MCF 10A (cell line): ENCODE measurements at regions of chr1 and their contacts with region 1.

Region 1: DNA sequence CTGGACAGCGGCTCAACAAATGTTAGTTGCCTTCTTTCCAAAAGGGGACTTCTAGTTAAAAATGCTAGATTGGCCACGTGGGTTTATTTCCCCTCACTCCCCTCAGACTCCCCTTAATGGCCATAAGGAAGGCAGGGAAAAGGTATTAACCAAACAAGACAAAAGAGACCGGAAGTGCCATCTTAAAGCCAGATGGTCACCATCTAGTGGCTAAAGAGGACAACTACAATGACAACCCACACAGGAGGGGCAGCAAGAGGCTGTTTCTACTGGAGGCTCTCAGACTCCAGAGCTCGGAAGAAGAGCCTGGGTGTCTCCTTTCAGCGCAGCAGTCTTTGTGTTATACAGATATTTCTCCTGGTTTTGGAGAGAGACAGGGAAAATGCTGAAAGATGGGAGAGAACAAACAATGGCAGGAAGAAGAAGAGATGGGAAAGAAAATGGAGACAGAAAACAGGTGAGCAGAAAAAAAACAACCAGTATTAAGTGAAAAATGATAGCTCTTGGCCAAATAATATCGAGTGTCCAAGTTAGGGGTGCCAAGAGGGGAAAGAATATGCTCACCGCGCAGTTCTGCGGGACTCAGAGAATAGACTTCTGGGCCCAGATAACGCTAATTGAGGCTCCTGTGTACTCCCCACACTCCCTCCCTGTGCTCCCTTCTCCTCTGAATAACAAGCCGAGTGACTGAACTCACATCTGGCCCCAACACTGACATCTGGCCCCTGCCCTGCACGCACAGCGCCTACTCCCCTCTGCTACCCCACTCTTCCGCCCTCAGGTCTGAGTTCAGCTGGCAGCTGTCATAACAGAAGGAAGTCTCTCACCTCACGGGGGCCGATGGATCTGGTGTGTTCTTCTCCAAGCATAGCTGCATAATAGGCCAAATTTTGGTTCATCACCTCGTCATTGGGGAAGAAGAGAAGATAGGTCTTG is 9.6 kb downstream of the P3H1 start:
- DNase-seq: peak; percentile 70
- H3K4me3 Mint-ChIP-seq: no peak overlapping the region
- H3K27ac Mint-ChIP-seq: no peak overlapping the region
- H3K4me1 Mint-ChIP-seq: peaks cover 14% of the 10 kb centered on the region
- H3K27me3 Mint-ChIP-seq: no peaks in the 10 kb centered on the region
- CTCF ChIP-seq: peak; percentile 61

Region 2: GRCh38 chr1:42576935-42577334 is 180.3 kb before region 1 on chr1:
- CTCF ChIA-PET with region 1: interaction called, 16 read pairs
- POLR2A ChIA-PET with region 1: interaction called, 4 read pairs
- intact Hi-C with region 1: loop called (anchors 2 kb)
- DNase-seq: no peak
- H3K4me3 Mint-ChIP-seq: no peak overlapping the region
- H3K27ac Mint-ChIP-seq: no peak overlapping the region
- H3K4me1 Mint-ChIP-seq: no peaks in the 10 kb centered on the region
- H3K27me3 Mint-ChIP-seq: no peaks in the 10 kb centered on the region
- CTCF ChIP-seq: no peak

Region 3: GRCh38 chr1:42747125-42747524 is 10.1 kb before region 1 on chr1:
- CTCF ChIA-PET with region 1: interaction called, 13 read pairs
- POLR2A ChIA-PET with region 1: interaction called, 5 read pairs
- intact Hi-C with region 1: no loop called
- DNase-seq: peak; percentile 35
- H3K4me3 Mint-ChIP-seq: no peak overlapping the region
- H3K27ac Mint-ChIP-seq: no peak overlapping the region
- H3K4me1 Mint-ChIP-seq: peaks cover 18% of the 10 kb centered on the region
- H3K27me3 Mint-ChIP-seq: no peaks in the 10 kb centered on the region
- CTCF ChIP-seq: peak; percentile 58

Region 4: DNA sequence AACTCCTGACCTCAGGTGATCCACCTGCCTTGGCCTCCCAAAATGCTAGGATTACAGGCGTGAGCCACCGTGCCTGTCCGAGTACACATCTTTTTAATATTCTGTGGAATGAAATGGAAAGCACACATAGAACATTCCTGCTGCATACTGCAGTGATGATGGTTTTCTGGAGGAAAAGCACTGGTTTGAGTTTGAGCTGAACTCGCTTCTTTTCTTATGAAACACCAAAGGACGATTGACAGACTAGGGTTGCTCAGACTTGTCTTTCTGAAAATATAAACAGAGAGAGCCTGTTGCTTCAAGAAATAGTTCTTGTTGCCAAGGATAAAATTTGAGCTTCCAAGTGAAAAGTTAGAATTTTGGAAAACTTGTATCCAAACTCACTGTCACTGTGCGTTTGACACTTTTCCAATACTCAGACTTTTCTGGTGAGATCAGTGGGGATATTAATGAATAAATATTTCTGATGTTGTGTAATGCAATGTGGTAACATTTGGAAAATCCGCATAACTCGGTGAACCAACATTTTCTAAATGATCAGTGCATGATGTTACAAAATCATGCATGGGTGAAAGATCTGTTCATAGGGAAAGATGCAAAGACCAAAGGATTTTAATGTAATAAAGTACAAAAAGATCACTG is 44.7 kb after region 1 on chr1:
- CTCF ChIA-PET with region 1: no interaction called
- POLR2A ChIA-PET with region 1: no interaction called
- intact Hi-C with region 1: no loop called
- DNase-seq: no peak
- H3K4me3 Mint-ChIP-seq: no peak overlapping the region
- H3K27ac Mint-ChIP-seq: no peak overlapping the region
- H3K4me1 Mint-ChIP-seq: no peaks in the 10 kb centered on the region
- H3K27me3 Mint-ChIP-seq: no peaks in the 10 kb centered on the region
- CTCF ChIP-seq: no peak